ENCODE measurements at regions of chr19 and their contacts with region 1.

Region 1: GRCh38 chr19:51194527-51195317 is 30.2 kb upstream of the CD33 start:
- DNase-seq: no peak
- H3K4me3 ChIP-seq: no peak overlapping the region
- H3K27ac ChIP-seq: no peak overlapping the region
- H3K4me1 ChIP-seq: no peaks in the 10 kb centered on the region
- H3K27me3 ChIP-seq: no peaks in the 10 kb centered on the region
- CTCF ChIP-seq: no peak
- EP300 ChIP-seq: no peak
- POLR2A ChIP-seq: no peak

Region 2: GRCh38 chr19:50882183-50882582 is 312.5 kb before region 1 on chr19:
- in situ Hi-C with region 1: no loop called
- intact Hi-C with region 1: no loop called
- DNase-seq: no peak
- H3K4me3 ChIP-seq: no peak overlapping the region
- H3K27ac ChIP-seq: no peak overlapping the region
- H3K4me1 ChIP-seq: peaks cover 0 to 4% (median 0%) of the 10 kb centered on the region in 4 donors
- H3K27me3 ChIP-seq: peaks cover 15% of the 10 kb centered on the region
- CTCF ChIP-seq: no peak
- EP300 ChIP-seq: no peak
- POLR2A ChIP-seq: no peak

Region 3: DNA sequence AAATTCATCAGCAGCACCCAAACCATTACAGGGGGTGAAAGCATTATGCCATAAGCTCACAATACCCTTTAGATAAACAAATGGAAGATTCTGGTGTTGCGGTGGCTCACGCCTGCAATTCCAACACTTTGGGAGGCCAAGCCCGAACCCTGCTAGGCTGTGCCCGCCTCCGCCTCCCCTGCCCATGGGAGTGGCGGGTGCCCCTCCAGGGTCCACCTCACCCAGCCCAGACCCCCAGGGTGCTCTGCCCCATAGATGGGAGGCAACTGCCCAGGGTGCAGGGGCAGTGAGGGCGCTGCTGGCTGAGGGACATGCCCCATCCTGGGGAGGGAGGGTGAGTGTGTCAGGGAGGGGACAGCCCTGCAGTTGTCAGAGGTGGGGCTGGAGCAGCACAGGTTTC is 46.1 kb after region 1 on chr19:
- in situ Hi-C with region 1: no loop called
- intact Hi-C with region 1: no loop called
- DNase-seq: no peak
- H3K4me3 ChIP-seq: no peak overlapping the region
- H3K27ac ChIP-seq: no peak overlapping the region
- H3K4me1 ChIP-seq: no peaks in the 10 kb centered on the region
- H3K27me3 ChIP-seq: no peaks in the 10 kb centered on the region
- CTCF ChIP-seq: no peak
- EP300 ChIP-seq: no peak
- POLR2A ChIP-seq: no peak

Region 4: DNA sequence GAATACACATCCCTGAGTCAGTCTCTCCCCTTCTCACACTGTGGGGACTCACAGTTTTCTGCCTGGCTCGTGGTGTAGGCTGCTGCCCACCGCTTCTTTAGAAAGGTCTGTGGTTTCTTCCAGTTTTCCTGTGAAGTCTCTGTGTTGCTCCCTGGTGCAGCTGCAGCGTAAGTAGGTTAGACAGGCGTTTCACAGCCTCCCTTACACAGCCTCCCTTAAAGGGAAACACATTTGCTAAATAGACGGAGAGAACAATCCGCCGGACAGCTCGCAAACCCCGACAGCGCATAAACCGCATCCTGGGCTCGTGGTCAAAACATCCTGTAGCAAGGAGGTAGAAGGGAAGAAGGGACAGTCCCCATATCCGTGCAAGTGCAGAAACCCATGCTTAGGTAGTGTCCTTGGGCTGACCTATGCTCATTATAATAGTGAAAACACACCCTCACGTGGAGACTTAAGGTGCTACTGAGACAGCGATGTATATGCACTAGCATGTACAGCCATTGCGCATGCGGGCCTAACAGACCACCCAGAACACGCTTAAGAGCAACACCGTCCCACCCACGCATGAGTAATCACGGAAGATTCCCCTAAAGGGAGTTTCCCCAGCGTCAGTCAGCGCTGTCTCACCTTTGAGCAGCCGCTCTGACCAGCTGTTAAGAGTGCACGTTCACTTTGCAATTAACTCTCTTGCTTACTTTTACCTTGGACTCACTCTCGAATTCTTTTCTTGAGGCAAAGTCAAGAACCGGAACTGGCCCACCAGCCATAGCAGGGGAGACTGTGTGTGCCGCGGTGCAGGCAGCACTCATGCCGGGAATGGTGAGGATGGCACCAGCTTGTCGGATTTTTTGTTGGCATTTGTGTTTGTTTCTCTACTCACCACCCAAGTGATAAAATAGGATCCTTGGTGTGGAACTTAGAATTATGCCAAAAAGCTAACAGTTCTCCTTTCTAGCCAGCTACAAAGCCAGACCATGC is 247.0 kb after region 1 on chr19:
- in situ Hi-C with region 1: loop called in 1 of 4 experiments (anchors 5 kb)
- intact Hi-C with region 1: no loop called
- DNase-seq: peak; percentile 73
- H3K4me3 ChIP-seq: peak overlapping the region in 1 of 4 donors; percentile 8
- H3K27ac ChIP-seq: peak overlapping the region in 3 of 4 donors; percentile 25 to 50 (median 40)
- H3K4me1 ChIP-seq: peaks cover 0 to 4% (median 0%) of the 10 kb centered on the region in 4 donors
- H3K27me3 ChIP-seq: peaks cover 28% of the 10 kb centered on the region
- CTCF ChIP-seq: no peak
- EP300 ChIP-seq: no peak
- POLR2A ChIP-seq: no peak

Region 5: DNA sequence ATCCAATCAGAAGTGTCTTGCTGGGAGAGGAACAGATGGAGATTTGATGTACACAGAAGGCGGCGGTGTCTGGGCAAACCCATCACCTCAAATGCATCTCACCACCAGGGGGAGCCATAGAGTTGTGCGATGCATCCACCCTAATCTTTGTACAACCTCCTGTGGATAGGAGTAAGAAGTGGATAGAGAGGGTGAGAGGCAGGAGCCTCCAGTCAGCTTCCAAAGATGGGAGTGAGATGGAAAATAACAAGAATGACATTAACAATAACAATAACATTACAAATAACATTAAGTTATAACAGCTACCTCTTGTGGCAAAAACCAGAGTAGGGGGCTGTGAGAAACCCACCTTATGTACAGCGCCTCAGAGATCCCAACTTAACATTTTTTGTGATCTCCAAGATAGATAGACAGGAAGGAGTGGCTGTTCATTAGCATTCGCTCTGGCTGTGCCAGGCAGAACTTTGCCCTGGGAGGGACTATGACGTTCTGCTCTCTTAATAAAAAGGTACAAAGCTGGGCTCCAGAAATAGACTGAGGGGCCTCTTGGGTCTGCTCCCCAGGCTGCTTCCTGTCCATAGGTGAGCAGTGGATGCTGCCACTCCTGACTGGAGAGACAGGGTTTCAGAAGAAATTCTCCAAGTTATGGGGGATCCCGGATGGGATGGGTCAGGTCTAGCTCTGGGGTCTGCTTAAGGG is 278.4 kb after region 1 on chr19:
- in situ Hi-C with region 1: no loop called
- intact Hi-C with region 1: no loop called
- DNase-seq: peak; percentile 78
- H3K4me3 ChIP-seq: no peak overlapping the region
- H3K27ac ChIP-seq: no peak overlapping the region
- H3K4me1 ChIP-seq: peaks cover 0 to under 1% (median 0%) of the 10 kb centered on the region in 4 donors
- H3K27me3 ChIP-seq: peaks cover 6% of the 10 kb centered on the region
- CTCF ChIP-seq: peak; percentile 67 to 87 (median 84)
- EP300 ChIP-seq: no peak
- POLR2A ChIP-seq: no peak